Activated CD8-positive, alpha-beta memory T cell treated with anti-CD3 and anti-CD28 coated beads, Interleukin-2, amount 10 ng/mL, durations not matched to agents 7 days and 5 days (primary cell): ENCODE measurements at regions of chr13 and their contacts with region 1.

Region 1: GRCh38 chr13:77729502-77730221 is 32.2 kb downstream of the SLAIN1 start:
- DNase-seq: peak; percentile 77
- ATAC-seq: peak; percentile 96
- H3K4me3 Mint-ChIP-seq: peak overlapping the region; percentile 71
- H3K27ac Mint-ChIP-seq: peak overlapping the region; percentile 90
- H3K4me1 Mint-ChIP-seq: peaks cover 50% of the 10 kb centered on the region
- H3K27me3 Mint-ChIP-seq: no peaks in the 10 kb centered on the region

Region 2: DNA sequence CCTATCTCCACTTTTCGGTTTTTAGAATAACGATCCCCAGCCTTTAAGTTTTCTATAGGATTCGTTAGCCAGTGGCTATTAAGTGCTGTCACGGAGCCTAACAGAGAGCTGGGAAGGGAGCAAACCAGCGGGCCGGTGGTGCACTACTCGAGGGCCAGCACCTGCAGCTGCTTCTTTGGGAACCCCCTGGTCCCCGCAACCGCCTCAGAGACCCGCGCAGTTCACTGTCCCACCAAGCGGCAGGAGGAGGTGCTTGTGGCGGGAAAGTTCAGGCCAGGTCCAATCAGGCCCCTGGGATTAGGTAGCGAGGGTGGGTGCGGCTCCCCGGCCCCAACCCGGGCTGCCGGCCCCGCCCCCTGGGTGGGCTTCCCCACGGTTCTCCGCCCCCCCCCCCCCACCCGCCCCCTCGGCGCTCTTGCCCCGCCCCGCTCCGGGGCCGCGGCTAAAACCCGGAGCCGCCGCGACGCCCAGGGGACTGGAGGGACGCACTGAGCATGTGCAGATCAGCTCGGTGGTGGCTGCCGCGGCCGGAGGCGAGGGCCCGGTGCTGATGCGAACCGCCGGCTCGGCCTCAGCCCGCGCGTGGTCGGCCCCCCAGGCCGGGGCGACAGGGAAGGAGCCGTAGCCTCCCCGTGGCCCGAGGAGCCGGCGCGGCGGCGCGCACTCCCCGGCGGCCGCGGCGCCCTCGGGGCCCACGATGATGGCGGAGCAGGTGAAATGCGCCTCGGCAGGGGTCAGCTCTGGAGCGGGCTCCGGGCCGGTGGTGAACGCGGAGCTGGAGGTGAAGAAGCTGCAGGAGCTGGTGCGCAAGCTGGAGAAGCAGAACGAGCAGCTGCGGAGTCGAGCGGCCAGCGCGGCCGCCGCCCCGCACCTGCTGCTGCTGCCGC is 32.2 kb before region 1 on chr13 and contains the start of gene SLAIN1:
- CTCF ChIA-PET with region 1: interaction called, 18 read pairs
- DNase-seq: peak; percentile 88
- ATAC-seq: peak; percentile 84
- H3K4me3 Mint-ChIP-seq: peak within 1 kb of the TSS; percentile 98
- H3K27ac Mint-ChIP-seq: peak within 1 kb of the TSS; percentile 96
- H3K4me1 Mint-ChIP-seq: peaks cover 28% of the 10 kb centered on the region
- H3K27me3 Mint-ChIP-seq: peaks cover 12% of the 10 kb centered on the region
- total RNA-seq, gene SLAIN1: 40.1 to 44.2 TPM